Activated naive CD4-positive, alpha-beta T cell treated with anti-CD3 and anti-CD28 coated beads for 36 hours (primary cell): ENCODE measurements at regions of chr5 and their contacts with region 1.

Region 1: DNA sequence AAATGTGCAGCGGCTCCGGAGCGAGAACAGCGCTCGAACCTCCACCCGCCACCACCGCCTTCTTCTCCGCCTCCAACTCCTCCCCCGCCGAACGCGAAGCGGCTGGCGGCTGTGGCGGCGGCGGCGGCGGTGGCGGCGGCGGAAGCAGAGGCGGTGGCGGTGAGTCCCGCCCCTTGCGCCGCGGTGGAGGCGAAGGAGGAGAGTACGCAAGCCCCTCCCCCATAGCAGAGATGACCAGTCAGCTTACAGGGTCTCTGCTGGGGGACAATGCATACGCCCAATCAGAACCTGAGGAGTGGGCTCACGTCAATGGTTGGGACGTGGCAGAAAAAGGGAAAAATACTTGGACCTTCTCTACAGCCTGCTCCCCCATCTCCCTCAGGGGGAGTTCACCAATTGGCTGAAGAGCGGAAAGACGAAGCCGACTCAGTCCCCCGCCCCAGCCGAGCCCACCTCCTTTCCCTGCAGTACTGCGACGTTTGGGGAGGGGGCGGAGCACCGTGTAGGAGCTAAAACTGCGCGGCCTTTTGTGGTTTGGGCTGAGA is at the start of gene PJA2:
- DNase-seq: peak; percentile 99
- H3K4me3 Mint-ChIP-seq: peak within 1 kb of the TSS; percentile 97
- H3K27ac Mint-ChIP-seq: peak within 1 kb of the TSS; percentile 100
- H3K4me1 Mint-ChIP-seq: peaks cover 46% of the 10 kb centered on the region
- H3K27me3 Mint-ChIP-seq: no peaks in the 10 kb centered on the region
- total RNA-seq, gene PJA2: 53.1 to 56.9 TPM

Region 2: GRCh38 chr5:108381954-108382783 is 1027.7 kb before region 1 on chr5 and contains the start of gene FBXL17:
- CTCF ChIA-PET with region 1: no interaction called
- intact Hi-C with region 1: loop called (anchors 1 kb)
- DNase-seq: peak; percentile 95
- H3K4me3 Mint-ChIP-seq: peak within 1 kb of the TSS; percentile 82
- H3K27ac Mint-ChIP-seq: peak within 1 kb of the TSS; percentile 95
- H3K4me1 Mint-ChIP-seq: peaks cover 36% of the 10 kb centered on the region
- H3K27me3 Mint-ChIP-seq: no peaks in the 10 kb centered on the region
- total RNA-seq, gene FBXL17: 3.5 to 4.3 TPM

Region 3: DNA sequence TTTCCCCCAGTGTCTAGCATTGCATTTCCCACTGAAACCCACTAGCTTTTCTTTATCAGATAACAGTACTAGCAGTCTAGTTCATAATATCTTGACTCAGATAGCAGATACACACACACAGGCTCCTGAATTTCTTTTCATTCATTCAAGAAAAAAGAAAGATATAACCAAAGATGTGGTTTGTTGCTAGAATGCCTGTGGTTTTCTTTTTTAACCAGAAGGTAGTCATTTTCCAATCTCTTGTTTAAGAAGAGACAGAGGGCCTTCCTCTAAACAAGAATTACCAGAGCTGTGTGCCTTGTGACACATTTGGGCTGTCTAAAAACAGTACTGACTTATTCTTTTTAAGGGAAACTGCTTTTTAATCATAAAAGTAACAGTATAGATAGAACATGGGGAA is 167.4 kb before region 1 on chr5:
- CTCF ChIA-PET with region 1: no interaction called
- intact Hi-C with region 1: loop called (anchors 1 kb)
- DNase-seq: peak; percentile 10
- H3K4me3 Mint-ChIP-seq: no peak overlapping the region
- H3K27ac Mint-ChIP-seq: no peak overlapping the region
- H3K4me1 Mint-ChIP-seq: peaks cover 5% of the 10 kb centered on the region
- H3K27me3 Mint-ChIP-seq: peaks cover 5% of the 10 kb centered on the region

Region 4: GRCh38 chr5:109439590-109439989 is 29.7 kb after region 1 on chr5:
- CTCF ChIA-PET with region 1: no interaction called
- intact Hi-C with region 1: no loop called
- DNase-seq: no peak
- H3K4me3 Mint-ChIP-seq: no peak overlapping the region
- H3K27ac Mint-ChIP-seq: no peak overlapping the region
- H3K4me1 Mint-ChIP-seq: no peaks in the 10 kb centered on the region
- H3K27me3 Mint-ChIP-seq: no peaks in the 10 kb centered on the region

Region 5: DNA sequence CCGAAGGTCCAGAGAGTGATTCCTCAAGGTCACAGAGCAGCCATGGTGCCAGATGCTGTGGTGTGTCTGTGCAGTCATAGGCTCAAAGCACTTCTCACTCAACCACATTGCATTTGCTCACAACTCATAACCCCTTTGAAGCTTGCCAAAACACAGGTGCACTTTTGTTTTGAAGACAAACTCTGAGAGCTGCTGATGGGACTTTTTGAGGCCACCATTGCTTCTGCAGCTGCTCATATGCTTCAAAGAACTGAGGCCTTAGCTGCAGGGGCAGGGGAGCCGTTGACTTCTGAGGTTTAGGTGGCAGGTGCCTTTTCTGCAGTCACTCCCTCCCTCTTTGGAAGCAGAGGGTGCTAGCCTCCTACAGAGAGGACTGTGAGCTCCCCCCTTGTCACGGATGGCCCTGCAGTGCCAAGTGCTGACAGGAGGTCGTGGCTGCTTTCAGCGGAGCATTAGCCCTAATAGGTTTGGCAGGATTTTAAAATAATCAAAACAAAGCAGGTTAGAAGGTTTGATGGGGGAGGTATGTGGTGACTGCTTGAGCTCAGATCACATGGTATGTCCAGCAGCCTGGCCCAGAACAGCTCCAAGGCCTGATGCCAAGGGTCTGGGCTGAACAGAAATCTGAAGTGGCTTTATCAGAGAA is 511.9 kb after region 1 on chr5:
- CTCF ChIA-PET with region 1: no interaction called
- intact Hi-C with region 1: loop called (anchors 5 kb)
- DNase-seq: peak; percentile 84
- H3K4me3 Mint-ChIP-seq: peak overlapping the region; percentile 55
- H3K27ac Mint-ChIP-seq: peak overlapping the region; percentile 93
- H3K4me1 Mint-ChIP-seq: peaks cover 35% of the 10 kb centered on the region
- H3K27me3 Mint-ChIP-seq: no peaks in the 10 kb centered on the region

Region 6: DNA sequence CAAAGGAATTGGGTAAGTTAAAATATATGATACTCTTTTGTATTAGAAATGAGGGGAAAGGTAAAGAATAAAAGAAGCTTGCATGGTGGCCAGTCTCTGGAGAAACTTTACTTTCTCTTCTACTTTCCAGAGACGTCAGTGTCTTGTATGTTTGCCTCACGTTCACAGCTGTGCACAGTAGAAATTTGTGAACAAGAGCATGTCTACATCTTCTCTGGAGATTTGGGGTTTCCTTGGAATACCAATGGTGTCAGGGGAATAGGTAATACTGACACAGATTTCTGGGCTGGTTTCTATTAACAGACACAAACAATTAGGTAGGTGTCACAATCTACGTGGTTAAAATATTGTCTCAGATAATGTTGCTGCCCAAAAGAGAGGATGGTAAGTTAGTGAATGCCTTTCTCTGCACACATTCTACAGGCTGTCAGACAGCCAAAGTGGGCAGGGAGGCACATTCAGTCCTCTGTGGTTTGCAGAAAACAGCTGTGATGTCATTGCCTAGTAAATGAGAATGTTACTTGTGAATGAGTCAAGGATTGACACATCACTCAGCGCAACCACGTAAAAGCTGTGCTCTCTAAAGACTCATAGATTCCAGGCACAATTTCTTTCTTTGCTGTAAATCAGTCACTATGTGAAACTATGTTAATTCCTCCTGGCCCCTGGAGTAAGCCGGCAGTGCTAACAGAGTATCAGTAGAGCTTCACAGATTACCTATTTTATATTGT is 676.9 kb after region 1 on chr5:
- CTCF ChIA-PET with region 1: no interaction called
- intact Hi-C with region 1: loop called (anchors 1 kb)
- DNase-seq: peak; percentile 89
- H3K4me3 Mint-ChIP-seq: peak overlapping the region; percentile 64
- H3K27ac Mint-ChIP-seq: peak overlapping the region; percentile 95
- H3K4me1 Mint-ChIP-seq: peaks cover 58% of the 10 kb centered on the region
- H3K27me3 Mint-ChIP-seq: no peaks in the 10 kb centered on the region

Region 7: DNA sequence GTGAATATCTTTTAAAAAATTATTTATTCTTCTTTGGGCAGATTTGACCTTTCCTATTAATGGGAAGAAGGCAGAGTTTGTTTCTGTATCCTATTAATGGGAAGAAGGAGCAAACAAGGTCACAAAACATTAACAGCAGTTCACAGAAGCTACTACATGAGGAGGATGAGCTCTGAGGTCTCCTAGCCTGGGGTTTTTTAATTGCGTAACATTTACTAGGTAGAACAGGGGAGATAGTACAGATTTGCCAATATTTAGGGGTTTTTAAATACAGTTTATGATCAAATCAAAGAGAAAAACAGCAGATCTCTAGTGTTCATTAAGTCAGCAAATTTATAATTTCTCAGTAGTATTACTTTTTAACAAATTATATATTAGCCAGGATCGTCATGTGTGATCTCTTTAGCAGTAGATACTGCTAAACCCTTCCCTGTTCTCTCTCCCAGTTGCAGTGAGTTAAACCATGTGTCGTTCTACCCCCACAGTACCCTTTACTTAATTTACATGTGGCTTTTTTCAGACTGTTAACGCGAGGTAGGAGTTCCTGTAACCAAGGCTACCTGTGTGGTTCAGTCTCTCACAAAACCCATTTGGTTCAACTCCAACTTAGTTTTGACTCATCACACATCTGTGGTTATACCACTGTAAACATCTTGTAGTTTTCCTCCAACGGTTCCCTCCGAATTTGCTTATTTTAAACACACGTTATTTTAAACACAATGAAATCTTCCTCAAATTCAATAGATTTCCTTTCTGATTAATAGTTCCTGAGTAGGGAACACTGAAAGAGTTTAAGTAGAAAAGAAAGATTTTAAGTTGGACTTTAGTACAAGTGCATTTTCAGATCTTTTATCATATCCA is 1342.2 kb after region 1 on chr5:
- CTCF ChIA-PET with region 1: no interaction called
- intact Hi-C with region 1: loop called (anchors 2 kb)
- DNase-seq: peak; percentile 53
- H3K4me3 Mint-ChIP-seq: peak overlapping the region; percentile 19
- H3K27ac Mint-ChIP-seq: peak overlapping the region; percentile 91
- H3K4me1 Mint-ChIP-seq: peaks cover 45% of the 10 kb centered on the region
- H3K27me3 Mint-ChIP-seq: no peaks in the 10 kb centered on the region